Mammary epithelial cell (primary cell): ENCODE measurements at regions of chr2 and their contacts with region 1.

Region 1: DNA sequence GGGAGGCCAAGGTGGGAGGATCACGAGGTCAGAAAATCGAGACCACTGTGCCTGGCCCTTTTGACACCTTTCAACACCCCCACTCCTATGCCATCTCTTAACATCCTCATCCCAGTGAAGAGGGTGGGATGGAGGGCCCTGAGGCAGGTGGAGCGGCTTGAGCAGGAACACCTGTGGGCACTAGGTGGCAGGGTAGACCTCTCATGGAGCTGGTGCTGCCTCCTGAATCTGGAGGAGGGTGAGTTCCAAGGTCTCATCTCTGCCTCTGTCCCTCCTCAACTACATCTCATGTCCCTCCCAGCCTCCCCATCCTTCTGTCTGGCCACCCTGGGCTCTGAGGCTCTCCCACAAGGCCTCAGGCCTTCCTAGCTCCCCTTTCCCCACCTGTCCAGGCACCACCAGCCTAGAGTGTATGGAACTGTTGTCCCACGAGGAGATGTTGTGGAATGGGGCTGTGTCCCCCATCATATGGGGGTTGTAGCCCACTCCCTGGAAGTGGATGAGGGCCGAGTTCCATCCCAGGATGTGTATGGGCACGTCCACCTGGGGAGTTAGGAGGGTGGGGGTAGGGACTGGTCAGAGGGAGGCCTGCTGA is 17.0 kb upstream of the CRYBA2 start:
- DNase-seq: no peak
- H3K4me3 ChIP-seq: no peak overlapping the region
- H3K27ac ChIP-seq: no peak overlapping the region
- H3K4me1 ChIP-seq: no peaks in the 10 kb centered on the region
- H3K27me3 ChIP-seq: no peaks in the 10 kb centered on the region
- CTCF ChIP-seq: peak; percentile 69 to 77

Region 2: DNA sequence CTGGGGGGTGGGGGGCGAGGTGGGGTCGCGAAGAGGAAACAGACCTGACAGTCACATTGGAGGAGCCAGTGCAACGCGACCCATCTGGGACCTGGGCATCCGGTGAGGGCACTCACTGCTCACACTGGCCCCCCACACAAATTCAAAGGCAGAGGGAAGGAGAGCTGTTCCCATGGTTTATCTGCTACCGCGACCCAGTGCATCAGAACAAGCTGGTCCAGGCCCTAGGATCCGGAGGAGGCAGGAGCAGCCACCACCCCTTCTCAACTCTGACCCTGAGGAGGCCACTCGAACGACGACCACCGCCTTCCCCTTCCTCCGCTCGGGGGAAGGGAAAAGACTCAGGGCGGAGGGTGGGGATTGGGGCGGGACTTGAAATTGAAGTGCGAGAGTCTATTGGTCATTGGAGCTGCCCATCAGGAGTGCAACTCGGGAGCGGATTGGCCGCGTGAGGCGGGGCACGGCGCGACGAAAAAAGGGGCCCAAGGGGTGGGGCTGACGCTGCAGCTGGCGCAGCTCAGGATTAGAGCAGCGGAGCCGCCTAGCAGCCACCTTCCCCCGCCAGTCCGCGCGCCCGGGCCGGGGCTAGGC is 51.0 kb before region 1 on chr2 and contains the start of gene CDK5R2:
- CTCF ChIA-PET with region 1: no interaction called
- dilution Hi-C with region 1: no loop called
- in situ Hi-C with region 1: no loop called
- intact Hi-C with region 1: no loop called
- DNase-seq: peak; percentile 74
- H3K4me3 ChIP-seq: peak within 1 kb of the TSS; percentile 30 to 55 (median 51)
- H3K27ac ChIP-seq: no peak within 1 kb of the TSS
- H3K4me1 ChIP-seq: peaks cover 26% of the 10 kb centered on the region
- H3K27me3 ChIP-seq: peaks cover 28% of the 10 kb centered on the region
- CTCF ChIP-seq: no peak
- total RNA-seq, gene CDK5R2: 0.49 TPM in 1 of 2 donors, not detected in the other

Region 3: GRCh38 chr2:219073413-219074129 is 63.3 kb after region 1 on chr2:
- CTCF ChIA-PET with region 1: no interaction called
- dilution Hi-C with region 1: loop called (anchors 10 kb)
- in situ Hi-C with region 1: no loop called
- intact Hi-C with region 1: no loop called
- DNase-seq: peak; percentile 41
- H3K4me3 ChIP-seq: no peak overlapping the region
- H3K27ac ChIP-seq: no peak overlapping the region
- H3K4me1 ChIP-seq: peaks cover 10% of the 10 kb centered on the region
- H3K27me3 ChIP-seq: no peaks in the 10 kb centered on the region
- CTCF ChIP-seq: peak; percentile 57 to 74

Region 4: GRCh38 chr2:219099329-219099728 is 89.1 kb after region 1 on chr2:
- CTCF ChIA-PET with region 1: no interaction called
- dilution Hi-C with region 1: loop called (anchors 5 kb)
- in situ Hi-C with region 1: no loop called
- intact Hi-C with region 1: no loop called
- DNase-seq: peak; percentile 59
- H3K4me3 ChIP-seq: no peak overlapping the region
- H3K27ac ChIP-seq: no peak overlapping the region
- H3K4me1 ChIP-seq: no peaks in the 10 kb centered on the region
- H3K27me3 ChIP-seq: no peaks in the 10 kb centered on the region
- CTCF ChIP-seq: no peak

Region 5: GRCh38 chr2:219142329-219142728 is 132.1 kb after region 1 on chr2:
- CTCF ChIA-PET with region 1: no interaction called
- dilution Hi-C with region 1: no loop called
- in situ Hi-C with region 1: loop called in 1 of 2 experiments (anchors 10 kb)
- intact Hi-C with region 1: no loop called
- DNase-seq: peak; percentile 77
- H3K4me3 ChIP-seq: no peak overlapping the region
- H3K27ac ChIP-seq: no peak overlapping the region
- H3K4me1 ChIP-seq: peaks cover 11% of the 10 kb centered on the region
- H3K27me3 ChIP-seq: no peaks in the 10 kb centered on the region
- CTCF ChIP-seq: peak in 1 of 2 donors; percentile 12

Region 6: GRCh38 chr2:219155054-219155644 is 144.9 kb after region 1 on chr2:
- CTCF ChIA-PET with region 1: interaction called, 3 read pairs
- dilution Hi-C with region 1: no loop called
- in situ Hi-C with region 1: no loop called
- intact Hi-C with region 1: loop called (anchors 1 kb)
- DNase-seq: peak; percentile 54
- H3K4me3 ChIP-seq: no peak overlapping the region
- H3K27ac ChIP-seq: no peak overlapping the region
- H3K4me1 ChIP-seq: peaks cover 9% of the 10 kb centered on the region
- H3K27me3 ChIP-seq: no peaks in the 10 kb centered on the region
- CTCF ChIP-seq: peak; percentile 23 to 61

Region 7: DNA sequence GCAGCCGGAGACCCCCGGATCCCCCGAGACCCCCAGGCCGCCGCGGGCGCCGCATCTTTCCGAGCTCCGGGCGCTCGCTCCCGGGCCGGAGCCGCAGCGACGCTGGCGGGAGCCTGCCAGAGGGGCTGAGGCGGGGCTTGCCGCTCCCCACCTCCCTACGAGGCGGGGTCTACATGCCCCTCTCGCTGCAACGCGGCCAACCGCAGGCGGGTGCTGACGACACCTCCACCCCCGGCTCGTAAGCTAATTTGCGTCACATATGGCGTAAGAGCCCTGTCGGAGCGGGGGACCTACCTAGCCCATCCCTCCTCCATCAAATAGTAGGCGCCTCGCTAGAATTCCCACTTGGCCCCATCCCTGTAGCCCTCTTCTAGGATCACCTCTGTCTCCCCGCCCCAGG is 299.0 kb after region 1 on chr2 and contains the start of gene PTPRN:
- CTCF ChIA-PET with region 1: interaction called, 12 read pairs
- dilution Hi-C with region 1: no loop called
- in situ Hi-C with region 1: no loop called
- intact Hi-C with region 1: no loop called
- DNase-seq: no peak
- H3K4me3 ChIP-seq: no peak within 1 kb of the TSS
- H3K27ac ChIP-seq: no peak within 1 kb of the TSS
- H3K4me1 ChIP-seq: peaks cover 7% of the 10 kb centered on the region
- H3K27me3 ChIP-seq: peaks cover 8% of the 10 kb centered on the region
- CTCF ChIP-seq: no peak
- total RNA-seq, gene PTPRN: not detected